ENCODE measurements at regions of chr17 and their contacts with region 1.

Region 1: GRCh38 chr17:41801374-41802271 is 10.1 kb downstream of the P3H4 start:
- DNase-seq: peak; percentile 91 to 94
- H3K4me3 ChIP-seq: peak overlapping the region; percentile 26
- H3K4me3 Mint-ChIP-seq: peak overlapping the region; percentile 83
- H3K27ac Mint-ChIP-seq: peak overlapping the region; percentile 99
- H3K4me1 ChIP-seq: peaks cover 31% of the 10 kb centered on the region
- H3K4me1 Mint-ChIP-seq: peaks cover 38% of the 10 kb centered on the region
- H3K27me3 ChIP-seq: no peaks in the 10 kb centered on the region
- H3K27me3 Mint-ChIP-seq: no peaks in the 10 kb centered on the region
- CTCF ChIP-seq: peak; percentile 97

Region 2: GRCh38 chr17:41665566-41666236 is 135.9 kb before region 1 on chr17:
- CTCF ChIA-PET with region 1: no interaction called
- POLR2A ChIA-PET with region 1: no interaction called
- intact Hi-C with region 1: no loop called
- DNase-seq: peak; percentile 89 to 96
- H3K4me3 ChIP-seq: peak overlapping the region; percentile 54
- H3K4me3 Mint-ChIP-seq: peak overlapping the region; percentile 83
- H3K27ac Mint-ChIP-seq: peak overlapping the region; percentile 78
- H3K4me1 ChIP-seq: peaks cover 11% of the 10 kb centered on the region
- H3K4me1 Mint-ChIP-seq: peaks cover 18% of the 10 kb centered on the region
- H3K27me3 ChIP-seq: no peaks in the 10 kb centered on the region
- H3K27me3 Mint-ChIP-seq: no peaks in the 10 kb centered on the region
- CTCF ChIP-seq: peak; percentile 81 to 97

Region 3: DNA sequence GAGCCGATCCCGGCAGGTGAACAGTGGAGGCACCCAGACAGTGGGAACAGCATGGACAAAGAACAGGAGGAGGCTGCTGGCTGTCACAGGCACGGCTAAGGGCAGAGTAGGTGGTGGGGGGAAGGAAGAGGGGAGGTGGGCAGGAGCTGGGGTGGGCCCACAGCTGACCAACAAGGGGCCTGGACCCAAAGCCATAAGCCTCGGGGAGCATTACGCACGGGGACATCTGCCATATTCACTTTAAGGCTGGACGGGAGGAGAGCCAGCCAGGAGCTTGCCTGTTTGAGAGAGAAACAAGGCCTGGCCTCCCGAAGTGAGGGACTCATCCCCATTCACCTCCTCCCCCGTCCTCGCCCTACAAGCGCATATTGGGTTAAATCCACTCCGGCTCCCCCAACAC is 47.6 kb before region 1 on chr17:
- CTCF ChIA-PET with region 1: interaction called, 9 read pairs
- POLR2A ChIA-PET with region 1: interaction called, 10 read pairs
- intact Hi-C with region 1: no loop called
- DNase-seq: no peak
- H3K4me3 ChIP-seq: no peak overlapping the region
- H3K4me3 Mint-ChIP-seq: no peak overlapping the region
- H3K27ac Mint-ChIP-seq: no peak overlapping the region
- H3K4me1 ChIP-seq: no peaks in the 10 kb centered on the region
- H3K4me1 Mint-ChIP-seq: no peaks in the 10 kb centered on the region
- H3K27me3 ChIP-seq: no peaks in the 10 kb centered on the region
- H3K27me3 Mint-ChIP-seq: no peaks in the 10 kb centered on the region
- CTCF ChIP-seq: no peak

Region 4: GRCh38 chr17:41772218-41772585 is 29.4 kb before region 1 on chr17:
- CTCF ChIA-PET with region 1: interaction called, 6 read pairs
- POLR2A ChIA-PET with region 1: interaction called, 7 read pairs
- intact Hi-C with region 1: loop called (anchors 1 kb)
- DNase-seq: peak; percentile 90 to 92
- H3K4me3 ChIP-seq: peak overlapping the region; percentile 20
- H3K4me3 Mint-ChIP-seq: peak overlapping the region; percentile 64
- H3K27ac Mint-ChIP-seq: peak overlapping the region; percentile 92
- H3K4me1 ChIP-seq: peaks cover 58% of the 10 kb centered on the region
- H3K4me1 Mint-ChIP-seq: peaks cover 41% of the 10 kb centered on the region
- H3K27me3 ChIP-seq: no peaks in the 10 kb centered on the region
- H3K27me3 Mint-ChIP-seq: no peaks in the 10 kb centered on the region
- CTCF ChIP-seq: no peak

Region 5: GRCh38 chr17:41864498-41864835 is 62.8 kb after region 1 on chr17:
- CTCF ChIA-PET with region 1: no interaction called
- POLR2A ChIA-PET with region 1: no interaction called
- intact Hi-C with region 1: no loop called
- DNase-seq: no peak
- H3K4me3 ChIP-seq: peak overlapping the region; percentile 97
- H3K4me3 Mint-ChIP-seq: no peak overlapping the region
- H3K27ac Mint-ChIP-seq: no peak overlapping the region
- H3K4me1 ChIP-seq: peaks cover 10% of the 10 kb centered on the region
- H3K4me1 Mint-ChIP-seq: peaks cover 7% of the 10 kb centered on the region
- H3K27me3 ChIP-seq: no peaks in the 10 kb centered on the region
- H3K27me3 Mint-ChIP-seq: no peaks in the 10 kb centered on the region
- CTCF ChIP-seq: no peak

Region 6: GRCh38 chr17:41892021-41892376 is 90.4 kb after region 1 on chr17:
- CTCF ChIA-PET with region 1: no interaction called
- POLR2A ChIA-PET with region 1: no interaction called
- intact Hi-C with region 1: no loop called
- DNase-seq: no peak
- H3K4me3 ChIP-seq: no peak overlapping the region
- H3K4me3 Mint-ChIP-seq: no peak overlapping the region
- H3K27ac Mint-ChIP-seq: no peak overlapping the region
- H3K4me1 ChIP-seq: peaks cover 7% of the 10 kb centered on the region; the same call in 1 of the 2 replicates
- H3K4me1 Mint-ChIP-seq: peaks cover 19% of the 10 kb centered on the region
- H3K27me3 ChIP-seq: no peaks in the 10 kb centered on the region
- H3K27me3 Mint-ChIP-seq: no peaks in the 10 kb centered on the region
- CTCF ChIP-seq: no peak

Region 7: GRCh38 chr17:41907185-41907556 is 105.5 kb after region 1 on chr17:
- CTCF ChIA-PET with region 1: no interaction called
- POLR2A ChIA-PET with region 1: no interaction called
- intact Hi-C with region 1: no loop called
- DNase-seq: no peak
- H3K4me3 ChIP-seq: no peak overlapping the region
- H3K4me3 Mint-ChIP-seq: no peak overlapping the region
- H3K27ac Mint-ChIP-seq: no peak overlapping the region
- H3K4me1 ChIP-seq: peaks cover 30% of the 10 kb centered on the region
- H3K4me1 Mint-ChIP-seq: peaks cover 21% of the 10 kb centered on the region
- H3K27me3 ChIP-seq: no peaks in the 10 kb centered on the region
- H3K27me3 Mint-ChIP-seq: no peaks in the 10 kb centered on the region
- CTCF ChIP-seq: no peak

Region 8: GRCh38 chr17:41930009-41930832 is 128.6 kb after region 1 on chr17 and contains the start of gene ODAD4:
- CTCF ChIA-PET with region 1: interaction called, 7 read pairs
- POLR2A ChIA-PET with region 1: interaction called, 10 read pairs
- intact Hi-C with region 1: no loop called
- DNase-seq: peak; percentile 97 to 98
- H3K4me3 ChIP-seq: peak within 1 kb of the TSS; percentile 41
- H3K4me3 Mint-ChIP-seq: peak within 1 kb of the TSS; percentile 97
- H3K27ac Mint-ChIP-seq: peak within 1 kb of the TSS; percentile 98
- H3K4me1 ChIP-seq: peaks cover 4% of the 10 kb centered on the region; the same call in 1 of the 2 replicates
- H3K4me1 Mint-ChIP-seq: peaks cover 17% of the 10 kb centered on the region
- H3K27me3 ChIP-seq: no peaks in the 10 kb centered on the region
- H3K27me3 Mint-ChIP-seq: no peaks in the 10 kb centered on the region
- CTCF ChIP-seq: peak; percentile 44 to 60
- total RNA-seq, gene ODAD4: 0.98 and 1.3 TPM in 2 replicates

Measured in Caco-2 (cell line).